ENCODE measurements at regions of chr11 and their contacts with region 1.

Region 1: GRCh38 chr11:14789879-14790484 is 102.0 kb downstream of the CYP2R1 start:
- DNase-seq: peak; percentile 21
- H3K4me3 Mint-ChIP-seq: no peak overlapping the region
- H3K27ac Mint-ChIP-seq: no peak overlapping the region
- H3K4me1 Mint-ChIP-seq: no peaks in the 10 kb centered on the region
- H3K27me3 Mint-ChIP-seq: peaks cover 27% of the 10 kb centered on the region
- CTCF ChIP-seq: peak; percentile 45

Region 2: DNA sequence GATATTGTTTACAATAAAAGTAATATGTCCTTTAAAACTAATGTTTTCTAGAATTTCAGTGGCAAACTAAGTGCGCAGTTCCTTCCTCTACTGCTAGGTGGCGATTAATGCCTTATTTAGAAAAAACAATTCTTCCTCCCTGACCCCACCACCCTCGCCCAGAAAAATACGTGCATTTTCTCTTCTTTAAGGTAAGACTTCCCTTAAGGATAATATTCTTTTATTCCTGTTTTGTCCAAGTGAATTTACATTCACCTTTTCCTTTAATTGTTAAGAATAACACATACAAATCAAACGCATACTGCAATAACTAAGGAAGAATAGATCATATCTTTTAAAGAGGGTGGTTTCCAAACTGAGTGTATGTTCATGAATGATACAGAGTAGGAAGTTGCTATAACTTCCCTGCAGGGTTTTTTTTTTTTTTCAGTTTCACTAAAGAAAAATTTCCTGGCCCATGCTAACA is 252.8 kb before region 1 on chr11:
- CTCF ChIA-PET with region 1: interaction called, 4 read pairs
- POLR2A ChIA-PET with region 1: no interaction called
- intact Hi-C with region 1: loop called (anchors 5 kb)
- DNase-seq: peak; percentile 35
- H3K4me3 Mint-ChIP-seq: no peak overlapping the region
- H3K27ac Mint-ChIP-seq: no peak overlapping the region
- H3K4me1 Mint-ChIP-seq: no peaks in the 10 kb centered on the region
- H3K27me3 Mint-ChIP-seq: no peaks in the 10 kb centered on the region
- CTCF ChIP-seq: peak; percentile 62

Region 3: GRCh38 chr11:14773755-14774154 is 16.2 kb before region 1 on chr11:
- CTCF ChIA-PET with region 1: interaction called, 10 read pairs
- POLR2A ChIA-PET with region 1: no interaction called
- intact Hi-C with region 1: no loop called
- DNase-seq: no peak
- H3K4me3 Mint-ChIP-seq: no peak overlapping the region
- H3K27ac Mint-ChIP-seq: no peak overlapping the region
- H3K4me1 Mint-ChIP-seq: no peaks in the 10 kb centered on the region
- H3K27me3 Mint-ChIP-seq: peaks cover 82% of the 10 kb centered on the region
- CTCF ChIP-seq: no peak

Region 4: DNA sequence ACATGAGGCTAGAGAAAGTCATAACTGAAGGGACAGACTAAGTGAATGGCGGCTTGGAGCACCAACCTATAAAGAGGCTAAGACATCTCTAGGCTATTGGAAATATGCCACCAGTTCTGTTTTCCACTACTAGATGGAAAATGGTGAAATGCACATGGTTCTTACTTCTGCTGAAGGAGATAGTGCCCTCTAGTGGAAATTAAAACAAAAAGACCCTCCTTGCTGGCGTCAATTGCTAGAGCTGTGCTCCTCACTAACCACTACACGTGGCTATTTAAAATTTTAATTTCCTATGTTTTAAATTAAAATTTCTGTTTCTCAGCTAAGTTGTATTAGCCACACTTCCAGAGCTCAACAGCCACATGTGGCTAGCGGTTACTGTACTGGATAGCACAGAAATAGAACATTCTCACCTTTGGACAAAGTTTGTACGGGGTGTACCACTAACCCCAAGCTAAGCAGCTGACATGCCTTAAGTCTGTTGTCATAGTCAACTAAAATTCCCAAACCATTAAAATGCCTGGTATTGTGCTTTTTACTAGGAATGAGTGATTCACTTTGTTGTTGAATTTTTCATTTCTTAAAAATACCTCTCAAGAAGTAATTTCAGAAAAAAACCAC is 216.3 kb after region 1 on chr11:
- CTCF ChIA-PET with region 1: no interaction called
- POLR2A ChIA-PET with region 1: no interaction called
- intact Hi-C with region 1: loop called (anchors 5 kb)
- DNase-seq: peak; percentile 57
- H3K4me3 Mint-ChIP-seq: no peak overlapping the region
- H3K27ac Mint-ChIP-seq: no peak overlapping the region
- H3K4me1 Mint-ChIP-seq: no peaks in the 10 kb centered on the region
- H3K27me3 Mint-ChIP-seq: peaks cover 62% of the 10 kb centered on the region
- CTCF ChIP-seq: peak; percentile 50

Region 5: GRCh38 chr11:15159085-15159484 is 369.1 kb after region 1 on chr11:
- CTCF ChIA-PET with region 1: interaction called, 3 read pairs
- POLR2A ChIA-PET with region 1: no interaction called
- intact Hi-C with region 1: loop called (anchors 2 kb)
- DNase-seq: peak; percentile 62
- H3K4me3 Mint-ChIP-seq: no peak overlapping the region
- H3K27ac Mint-ChIP-seq: no peak overlapping the region
- H3K4me1 Mint-ChIP-seq: peaks cover 22% of the 10 kb centered on the region
- H3K27me3 Mint-ChIP-seq: no peaks in the 10 kb centered on the region
- CTCF ChIP-seq: peak; percentile 79

Region 6: GRCh38 chr11:15208378-15209222 is 418.6 kb after region 1 on chr11:
- CTCF ChIA-PET with region 1: interaction called, 9 read pairs
- POLR2A ChIA-PET with region 1: no interaction called
- intact Hi-C with region 1: loop called (anchors 5 kb)
- DNase-seq: peak; percentile 71
- H3K4me3 Mint-ChIP-seq: no peak overlapping the region
- H3K27ac Mint-ChIP-seq: no peak overlapping the region
- H3K4me1 Mint-ChIP-seq: no peaks in the 10 kb centered on the region
- H3K27me3 Mint-ChIP-seq: no peaks in the 10 kb centered on the region
- CTCF ChIP-seq: peak; percentile 95

Measured in MCF 10A (cell line).